Lower leg skin (tissue), 4 donors: ENCODE measurements at regions of chr10 and their contacts with region 1.

Region 1: GRCh38 chr10:14353291-14353913 is 22.7 kb upstream of the FRMD4A start:
- DNase-seq: peak in 1 of 2 donors; percentile 75
- H3K4me3 ChIP-seq: no peak overlapping the region
- CTCF ChIP-seq: no peak
- POLR2A ChIP-seq: no peak

Region 2: GRCh38 chr10:14727465-14727864 is 374.1 kb after region 1 on chr10:
- intact Hi-C with region 1: loop called (anchors 5 kb)
- DNase-seq: no peak
- H3K4me3 ChIP-seq: no peak overlapping the region
- CTCF ChIP-seq: no peak
- POLR2A ChIP-seq: no peak

Region 3: GRCh38 chr10:15780353-15781135 is 1427.1 kb after region 1 on chr10:
- intact Hi-C with region 1: no loop called
- DNase-seq: no peak
- H3K4me3 ChIP-seq: no peak overlapping the region
- CTCF ChIP-seq: no peak
- POLR2A ChIP-seq: no peak